Aorta (tissue), 5 donors: ENCODE measurements at regions of chr15 and their contacts with region 1.

Region 1: DNA sequence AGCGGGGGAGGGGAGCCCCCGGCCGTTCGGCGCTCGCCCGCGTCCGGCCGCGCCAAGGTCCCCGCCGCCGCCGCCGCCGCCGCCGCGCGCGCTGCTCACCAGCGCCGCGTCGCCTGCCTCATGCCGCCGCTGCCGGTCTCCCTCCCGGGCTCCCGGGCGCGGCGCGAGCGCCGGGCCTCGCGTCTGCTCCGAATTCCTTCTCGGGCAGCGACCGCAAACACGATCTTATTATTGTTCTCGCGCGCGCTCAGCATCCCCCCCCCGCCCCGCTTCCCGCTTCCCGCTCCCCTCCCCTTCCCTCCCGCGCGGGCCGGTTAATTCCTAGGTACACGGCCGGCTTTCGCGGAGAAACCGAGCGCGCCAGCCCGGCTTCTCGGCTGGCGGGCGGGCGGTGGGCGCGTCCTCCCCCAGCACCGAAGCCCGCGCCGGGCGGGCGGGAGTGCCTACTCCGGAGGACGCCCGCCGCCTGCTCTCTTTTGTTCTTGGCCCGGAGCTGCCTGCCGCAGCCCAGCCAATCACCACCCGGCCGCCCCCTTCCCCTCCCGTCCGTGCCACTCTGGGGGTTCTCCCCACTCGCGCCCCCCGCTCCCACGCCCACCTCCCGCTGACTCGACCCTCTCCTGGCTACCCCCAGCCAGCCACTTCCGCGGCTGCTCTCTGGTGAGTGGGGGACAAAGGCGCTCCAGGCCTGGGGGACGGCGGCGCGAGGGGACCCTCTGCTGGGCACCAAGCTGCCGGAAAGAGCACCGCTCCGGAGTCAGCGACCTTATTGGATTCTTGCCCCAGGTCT is at the start of gene HDGFL3:
- DNase-seq: peak; percentile 71 to 88
- ATAC-seq: peak; percentile 58
- H3K4me3 ChIP-seq: peak within 1 kb of the TSS; percentile 88 to 91
- H3K27ac ChIP-seq: peak within 1 kb of the TSS; percentile 43 to 85
- H3K4me1 ChIP-seq: peaks cover 0 to 4% of the 10 kb centered on the region in 2 donors
- H3K27me3 ChIP-seq: peaks cover 0 to 1% of the 10 kb centered on the region in 2 donors
- total RNA-seq, gene HDGFL3: 65.3 to 68.4 TPM

Region 2: DNA sequence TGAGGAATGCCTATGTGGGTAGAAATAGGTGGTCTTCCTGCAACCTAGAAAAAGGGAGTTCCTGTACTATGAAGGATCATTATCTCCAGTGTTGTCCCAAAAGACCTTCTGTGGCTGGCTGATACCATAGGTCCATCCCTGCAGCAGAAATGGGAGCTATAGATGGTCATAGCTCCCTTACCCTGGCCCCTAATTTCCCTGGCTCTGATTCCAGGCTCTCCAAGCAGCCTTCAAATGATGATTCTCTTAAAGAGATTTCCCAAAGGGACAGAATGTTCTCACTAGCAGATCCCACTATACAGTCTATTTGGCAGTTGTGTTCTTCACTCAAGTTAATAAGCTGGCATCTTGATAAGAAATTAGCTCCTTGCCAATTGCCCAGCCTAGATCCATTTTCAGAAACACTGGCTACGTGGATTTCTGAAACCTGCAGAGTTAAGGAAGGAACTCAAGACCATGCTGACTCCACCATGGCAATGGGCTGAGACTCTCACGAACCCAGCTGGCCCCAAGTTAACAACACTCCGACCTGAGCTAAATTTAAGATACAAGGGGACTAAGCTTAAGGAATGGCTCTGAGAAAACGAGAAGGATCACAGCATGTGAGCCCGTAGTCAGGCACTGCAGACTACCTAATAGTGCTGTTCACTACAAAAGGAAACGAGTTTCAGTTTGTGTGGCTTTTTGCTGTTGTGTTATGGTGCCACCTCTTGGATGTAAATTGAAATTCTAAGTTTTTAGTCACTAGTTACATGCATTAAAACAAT is 207.7 kb before region 1 on chr15:
- intact Hi-C with region 1: loop called in 1 of 2 experiments (anchors 10 kb)
- DNase-seq: no peak
- ATAC-seq: peak; percentile 77
- H3K4me3 ChIP-seq: no peak overlapping the region
- H3K27ac ChIP-seq: no peak overlapping the region
- H3K4me1 ChIP-seq: peaks cover 0 to 3% of the 10 kb centered on the region in 2 donors
- H3K27me3 ChIP-seq: no peaks in the 10 kb centered on the region

Region 3: GRCh38 chr15:83011271-83012075 is 196.3 kb before region 1 on chr15 and contains the start of gene C15orf40:
- intact Hi-C with region 1: loop called (anchors 10 kb)
- DNase-seq: peak; percentile 94 to 96
- ATAC-seq: peak; percentile 99
- H3K4me3 ChIP-seq: peak within 1 kb of the TSS; percentile 69 to 97
- H3K27ac ChIP-seq: peak within 1 kb of the TSS in 1 of 2 donors; percentile 34
- H3K4me1 ChIP-seq: peaks cover 0 to 4% of the 10 kb centered on the region in 2 donors
- H3K27me3 ChIP-seq: no peaks in the 10 kb centered on the region
- total RNA-seq, gene C15orf40: 15.0 to 15.3 TPM

Region 4: GRCh38 chr15:83053151-83053550 is 154.7 kb before region 1 on chr15:
- intact Hi-C with region 1: loop called in 1 of 2 experiments (anchors 10 kb)
- DNase-seq: no peak
- ATAC-seq: peak; percentile 59
- H3K4me3 ChIP-seq: no peak overlapping the region
- H3K27ac ChIP-seq: no peak overlapping the region
- H3K4me1 ChIP-seq: peaks cover 0 to 2% of the 10 kb centered on the region in 2 donors
- H3K27me3 ChIP-seq: no peaks in the 10 kb centered on the region

Region 5: DNA sequence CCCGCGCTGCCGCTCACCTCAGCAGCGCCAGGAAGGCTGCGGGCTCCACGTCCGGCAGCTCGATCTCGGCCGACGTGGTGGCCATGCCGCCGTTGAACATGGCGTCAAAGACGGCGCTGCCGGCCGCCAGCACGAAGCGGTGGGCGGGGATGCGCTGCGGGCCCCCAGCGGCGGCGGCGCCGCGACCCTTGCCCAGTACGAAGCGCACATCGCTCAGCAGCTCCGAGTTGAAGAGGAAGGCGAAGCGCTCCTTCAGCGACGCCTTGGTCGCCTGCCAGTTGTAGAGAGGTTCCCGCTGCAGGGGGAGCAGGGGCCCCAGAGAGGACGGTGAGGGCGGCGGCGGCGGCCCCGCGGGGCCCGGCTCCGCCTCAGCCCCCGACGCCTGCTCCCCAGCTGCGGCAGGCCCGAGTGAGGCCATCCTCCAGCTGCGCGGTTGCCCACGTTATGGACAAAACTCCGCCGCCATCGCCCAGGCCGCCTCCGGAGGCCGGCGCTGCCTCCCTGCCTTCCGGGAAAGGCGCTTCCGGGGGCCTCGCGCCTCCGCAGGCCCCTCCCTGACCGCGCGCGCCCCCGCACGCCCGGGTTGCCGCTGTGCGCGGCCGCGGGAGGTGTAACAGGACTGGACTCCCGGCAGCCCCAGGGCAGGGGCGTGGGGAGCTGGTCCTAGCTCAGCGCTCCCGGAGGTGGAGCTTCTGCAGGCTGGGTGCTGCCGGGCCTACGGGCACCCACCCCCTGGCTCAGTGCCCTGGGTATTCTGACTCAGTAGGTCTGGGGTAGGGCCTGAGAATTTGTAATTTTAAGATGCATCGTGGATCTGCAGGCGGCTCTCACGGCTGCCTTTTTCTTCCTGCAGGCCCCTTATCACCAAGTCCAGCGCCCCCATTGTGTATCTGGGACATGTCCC is 140.8 kb before region 1 on chr15 and contains the start of gene BTBD1:
- intact Hi-C with region 1: loop called in 1 of 2 experiments (anchors 5 kb)
- DNase-seq: peak; percentile 98 to 99
- ATAC-seq: peak; percentile 100
- H3K4me3 ChIP-seq: peak within 1 kb of the TSS; percentile 80 to 96
- H3K27ac ChIP-seq: peak within 1 kb of the TSS; percentile 92 to 95
- H3K4me1 ChIP-seq: peaks cover 0 to 5% of the 10 kb centered on the region in 2 donors
- H3K27me3 ChIP-seq: no peaks in the 10 kb centered on the region
- total RNA-seq, gene BTBD1: 38.3 to 47.8 TPM

Region 6: GRCh38 chr15:83248151-83249029 is 40.6 kb after region 1 on chr15:
- intact Hi-C with region 1: no loop called
- DNase-seq: no peak
- ATAC-seq: peak; percentile 74
- H3K4me3 ChIP-seq: no peak overlapping the region
- H3K27ac ChIP-seq: no peak overlapping the region
- H3K4me1 ChIP-seq: no peaks in the 10 kb centered on the region
- H3K27me3 ChIP-seq: no peaks in the 10 kb centered on the region